ENCODE measurements at regions of chrX and their contacts with region 1.

Region 1: GRCh38 chrX:30971774-30972603 is 82.9 kb upstream of the TAB3 start:
- DNase-seq: peak in 5 of 9 donors; percentile 12 to 22 (median 19)
- ATAC-seq: peak; percentile 76
- H3K4me3 ChIP-seq: peak overlapping the region; percentile 20
- H3K4me3 Mint-ChIP-seq: peak overlapping the region; percentile 51 to 92 (median 80)
- H3K27ac ChIP-seq: no peak overlapping the region
- H3K27ac Mint-ChIP-seq: peak overlapping the region in 1 of 9 donors; percentile 80
- H3K4me1 ChIP-seq: no peaks in the 10 kb centered on the region
- H3K4me1 Mint-ChIP-seq: peaks cover 0 to 16% (median 13%) of the 10 kb centered on the region in 7 donors
- H3K27me3 ChIP-seq: no peaks in the 10 kb centered on the region
- H3K27me3 Mint-ChIP-seq: peaks cover 0 to 8% (median 4%) of the 10 kb centered on the region in 5 donors

Region 2: DNA sequence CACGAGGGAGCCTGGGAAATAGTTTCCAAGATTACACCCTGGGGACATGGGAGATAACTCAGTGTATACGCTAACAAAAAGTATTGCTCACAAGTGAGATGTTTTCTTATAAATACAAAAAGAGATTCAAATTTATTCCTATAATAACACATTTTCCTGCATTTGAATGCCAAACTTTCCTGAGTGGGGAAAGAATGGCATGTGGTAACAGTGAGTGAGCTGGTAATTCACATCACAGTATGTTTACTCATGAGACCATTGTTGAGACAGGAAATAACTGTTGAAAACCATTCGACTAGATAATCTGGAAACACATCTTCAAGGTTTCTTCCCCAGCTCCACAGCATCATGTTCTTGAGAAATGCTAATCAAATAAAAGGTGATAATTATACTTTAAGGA is 503.5 kb before region 1 on chrX:
- CTCF ChIA-PET with region 1: no interaction called
- POLR2A ChIA-PET with region 1: no interaction called
- intact Hi-C with region 1: no loop called
- DNase-seq: no peak
- ATAC-seq: no peak
- H3K4me3 ChIP-seq: no peak overlapping the region
- H3K4me3 Mint-ChIP-seq: no peak overlapping the region
- H3K27ac ChIP-seq: no peak overlapping the region
- H3K27ac Mint-ChIP-seq: no peak overlapping the region
- H3K4me1 ChIP-seq: no peaks in the 10 kb centered on the region
- H3K4me1 Mint-ChIP-seq: no peaks in the 10 kb centered on the region
- H3K27me3 ChIP-seq: no peaks in the 10 kb centered on the region
- H3K27me3 Mint-ChIP-seq: peaks cover 0 to 6% (median 4%) of the 10 kb centered on the region in 5 donors

Region 3: GRCh38 chrX:31007321-31007720 is 35.3 kb after region 1 on chrX:
- CTCF ChIA-PET with region 1: no interaction called
- POLR2A ChIA-PET with region 1: no interaction called
- intact Hi-C with region 1: no loop called
- DNase-seq: no peak
- ATAC-seq: no peak
- H3K4me3 ChIP-seq: no peak overlapping the region
- H3K4me3 Mint-ChIP-seq: no peak overlapping the region
- H3K27ac ChIP-seq: no peak overlapping the region
- H3K27ac Mint-ChIP-seq: no peak overlapping the region
- H3K4me1 ChIP-seq: no peaks in the 10 kb centered on the region
- H3K4me1 Mint-ChIP-seq: no peaks in the 10 kb centered on the region
- H3K27me3 ChIP-seq: no peaks in the 10 kb centered on the region
- H3K27me3 Mint-ChIP-seq: peaks cover 0 to 6% (median 0%) of the 10 kb centered on the region in 5 donors

Region 4: DNA sequence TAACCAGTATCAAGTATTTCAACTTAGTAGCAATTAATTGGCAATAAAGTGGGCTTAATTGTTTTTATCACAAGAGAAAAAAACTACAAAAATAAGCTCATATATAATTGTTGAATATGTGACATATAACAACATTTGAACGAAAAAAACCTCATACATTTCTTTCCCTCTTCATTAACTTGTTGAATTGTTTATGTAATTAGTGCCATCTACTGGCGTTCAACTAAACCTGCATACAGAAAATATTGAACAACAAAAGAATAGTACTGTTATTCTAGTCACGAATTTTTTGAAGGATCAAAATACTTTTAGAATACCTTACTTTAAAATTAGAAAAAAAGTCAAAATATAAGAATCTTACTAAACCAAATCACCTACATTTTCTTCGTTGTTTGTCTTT is 686.4 kb after region 1 on chrX:
- CTCF ChIA-PET with region 1: no interaction called
- POLR2A ChIA-PET with region 1: no interaction called
- intact Hi-C with region 1: loop called in 1 of 2 experiments (anchors 1 kb)
- DNase-seq: peak in 1 of 9 donors; percentile 4
- ATAC-seq: no peak
- H3K4me3 ChIP-seq: no peak overlapping the region
- H3K4me3 Mint-ChIP-seq: no peak overlapping the region
- H3K27ac ChIP-seq: no peak overlapping the region
- H3K27ac Mint-ChIP-seq: no peak overlapping the region
- H3K4me1 ChIP-seq: no peaks in the 10 kb centered on the region
- H3K4me1 Mint-ChIP-seq: no peaks in the 10 kb centered on the region
- H3K27me3 ChIP-seq: no peaks in the 10 kb centered on the region
- H3K27me3 Mint-ChIP-seq: no peaks in the 10 kb centered on the region